Breast epithelium (tissue), 4 donors: ENCODE measurements at regions of chr13 and their contacts with region 1.

Region 1: DNA sequence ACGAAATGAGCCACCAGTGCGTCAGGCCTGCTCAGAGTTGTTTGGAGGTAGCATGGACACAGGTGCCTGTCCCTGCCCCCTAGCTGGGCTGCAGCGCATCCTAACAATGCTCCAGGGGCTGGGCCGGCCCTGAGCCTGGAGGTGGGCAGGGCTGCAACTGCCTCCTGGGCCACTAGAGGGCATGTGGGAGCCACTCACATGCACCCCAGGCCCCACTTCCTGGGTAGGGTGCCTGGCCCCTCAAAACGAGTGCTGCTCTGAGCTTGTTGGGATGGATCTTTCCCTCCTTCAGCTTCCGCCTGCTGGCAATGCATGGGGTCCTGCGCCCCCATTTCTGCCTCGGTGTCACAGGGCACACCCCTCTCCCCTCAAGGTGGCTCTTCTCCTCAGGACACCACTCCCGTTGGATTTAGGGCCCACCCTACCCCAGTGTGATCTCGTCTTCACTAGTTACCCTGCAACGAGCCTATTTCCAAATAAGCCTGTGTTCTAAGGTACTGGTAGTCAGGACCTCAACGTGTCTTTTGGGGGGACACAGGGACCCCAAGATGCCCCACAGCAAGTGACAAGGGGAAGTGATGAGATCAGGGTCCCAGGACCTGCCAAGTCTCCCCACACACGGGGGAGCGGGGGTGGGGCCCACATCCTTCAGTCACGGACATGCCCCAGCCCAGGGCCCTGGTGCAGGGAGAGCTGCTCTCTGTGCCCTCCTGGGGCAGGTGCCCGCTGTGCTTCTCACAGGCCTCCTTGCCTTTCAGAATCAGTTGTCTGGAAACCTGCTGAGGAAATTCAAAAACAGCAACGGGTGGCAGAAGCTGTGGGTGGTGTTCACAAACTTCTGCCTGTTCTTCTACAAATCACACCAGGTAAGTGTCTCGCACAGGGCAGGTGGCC is 131.3 kb downstream of the STK24 start:
- DNase-seq: peak; percentile 50 to 66
- H3K4me3 ChIP-seq: peak overlapping the region in 1 of 3 donors; percentile 39
- H3K27ac ChIP-seq: peak overlapping the region; percentile 71 to 84
- H3K4me1 ChIP-seq: no peaks in the 10 kb centered on the region
- H3K27me3 ChIP-seq: no peaks in the 10 kb centered on the region
- CTCF ChIP-seq: peak; percentile 89 to 95 (median 95)
- POLR2A ChIP-seq: no peak

Region 2: GRCh38 chr13:98576963-98577822 is 131.6 kb after region 1 on chr13 and contains the start of gene STK24:
- intact Hi-C with region 1: loop called (anchors 10 kb)
- DNase-seq: peak in 1 of 2 donors; percentile 45
- H3K4me3 ChIP-seq: peak within 1 kb of the TSS; percentile 95 to 99 (median 98)
- H3K27ac ChIP-seq: peak within 1 kb of the TSS; percentile 97 to 100
- H3K4me1 ChIP-seq: peaks cover 0 to 6% of the 10 kb centered on the region in 2 donors
- H3K27me3 ChIP-seq: no peaks in the 10 kb centered on the region
- CTCF ChIP-seq: no peak
- POLR2A ChIP-seq: no peak
- total RNA-seq, gene STK24: 61.3 to 149 (median 71.9) TPM

Region 3: GRCh38 chr13:98653463-98653985 is 207.9 kb after region 1 on chr13:
- intact Hi-C with region 1: loop called (anchors 5 kb)
- DNase-seq: peak; percentile 76 to 78
- H3K4me3 ChIP-seq: no peak overlapping the region
- H3K27ac ChIP-seq: no peak overlapping the region
- H3K4me1 ChIP-seq: no peaks in the 10 kb centered on the region
- H3K27me3 ChIP-seq: no peaks in the 10 kb centered on the region
- CTCF ChIP-seq: peak; percentile 91 to 92 (median 92)
- POLR2A ChIP-seq: no peak

Region 4: GRCh38 chr13:99182439-99182838 is 736.9 kb after region 1 on chr13:
- intact Hi-C with region 1: loop called (anchors 10 kb)
- DNase-seq: no peak
- H3K4me3 ChIP-seq: no peak overlapping the region
- H3K27ac ChIP-seq: no peak overlapping the region
- H3K4me1 ChIP-seq: no peaks in the 10 kb centered on the region
- H3K27me3 ChIP-seq: no peaks in the 10 kb centered on the region
- CTCF ChIP-seq: no peak
- POLR2A ChIP-seq: no peak